Activated T-helper 2 cell treated with anti-CD3 and anti-CD28 coated beads, Interferon-gamma antibody, Interleukin-2, Interleukin-4, amounts not matched to agents 10 μg/mL and 5 μg/mL and 100 μg/mL, durations not matched to agents 14 hours and 24 hours and 36 hours (primary cell): ENCODE measurements at regions of chr2 and their contacts with region 1.

Region 1: DNA sequence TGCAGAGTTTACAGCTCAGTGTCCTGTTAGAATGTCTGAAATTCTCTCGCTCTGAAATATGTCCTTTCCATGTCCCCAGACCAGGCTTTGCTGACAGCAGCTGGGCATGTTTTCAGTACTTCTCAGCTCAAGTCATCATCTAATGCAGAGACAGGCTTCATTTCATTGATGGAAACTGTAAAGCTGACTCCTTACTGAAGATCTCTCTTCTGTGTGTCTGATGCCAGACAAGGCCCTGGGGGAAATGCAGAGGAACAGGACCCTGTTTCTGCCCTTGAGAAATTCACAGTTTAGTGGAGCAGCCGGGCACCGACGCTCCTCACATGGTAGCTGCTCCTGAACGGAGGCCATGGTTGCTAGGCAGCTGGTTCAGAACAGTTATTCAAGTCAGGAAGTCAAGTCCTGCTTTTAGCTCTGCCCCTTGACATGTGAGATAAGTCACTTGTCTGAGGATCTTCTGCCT is 24.6 kb upstream of the FZD7 start:
- DNase-seq: no peak
- H3K4me3 Mint-ChIP-seq: no peak overlapping the region
- H3K27ac Mint-ChIP-seq: no peak overlapping the region
- H3K4me1 Mint-ChIP-seq: no peaks in the 10 kb centered on the region
- H3K27me3 Mint-ChIP-seq: peaks cover 24% of the 10 kb centered on the region

Region 2: DNA sequence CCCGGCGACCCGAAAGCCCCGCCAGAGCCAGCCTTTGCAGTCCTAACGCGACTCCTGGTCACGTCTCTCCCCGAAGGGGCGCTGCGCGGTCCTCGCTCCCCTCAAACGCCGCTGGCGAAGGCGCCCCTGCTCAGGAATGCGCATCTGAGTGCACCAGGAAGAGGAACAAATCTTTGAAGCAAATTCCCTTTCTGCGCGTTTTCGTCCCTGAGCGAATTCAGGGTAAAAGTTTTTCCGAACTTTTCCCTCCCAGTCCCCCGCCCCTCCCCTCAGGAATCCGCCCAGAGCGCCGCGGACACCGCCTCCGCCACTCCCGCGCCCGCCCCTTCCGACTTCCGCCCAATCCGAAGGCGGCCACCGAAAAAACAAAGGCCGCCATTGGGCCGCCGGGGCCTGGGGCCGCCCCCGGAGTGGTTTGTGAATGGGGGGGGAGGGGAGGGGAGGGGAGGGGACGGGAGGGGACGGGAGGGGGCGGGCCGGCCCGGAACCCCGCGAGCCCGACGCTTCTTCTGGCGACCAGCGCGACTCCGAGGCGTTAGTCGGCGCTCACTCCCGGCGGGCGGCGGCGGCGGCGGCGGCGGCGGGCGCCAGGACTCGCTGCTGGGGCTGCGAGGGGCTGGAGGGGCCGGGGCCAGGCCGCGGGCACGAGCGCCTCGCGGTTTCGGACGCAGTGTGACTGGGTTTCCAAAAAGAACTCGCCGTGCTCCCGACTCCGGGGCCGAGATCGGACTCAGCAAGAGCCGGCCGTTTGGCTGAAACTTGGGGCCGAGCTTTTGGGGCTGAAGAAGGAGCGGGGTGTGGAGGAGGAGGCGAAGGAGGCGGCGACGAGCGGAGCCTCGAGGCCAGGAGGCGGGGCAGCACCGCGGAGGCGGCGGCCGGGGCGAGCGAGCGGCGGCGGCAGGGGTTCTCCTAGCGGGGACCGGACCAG is 24.5 kb after region 1 on chr2 and contains the start of gene FZD7:
- intact Hi-C with region 1: loop called (anchors 2 kb)
- DNase-seq: peak; percentile 79
- H3K4me3 Mint-ChIP-seq: peak within 1 kb of the TSS; percentile 83
- H3K27ac Mint-ChIP-seq: no peak within 1 kb of the TSS
- H3K4me1 Mint-ChIP-seq: peaks cover 11% of the 10 kb centered on the region
- H3K27me3 Mint-ChIP-seq: peaks cover 50% of the 10 kb centered on the region
- total RNA-seq, gene FZD7: 1.1 and 1.4 TPM in 2 replicates